CD8-positive, alpha-beta T cell (primary cell): ENCODE measurements at regions of chr13 and their contacts with region 1.

Region 1: DNA sequence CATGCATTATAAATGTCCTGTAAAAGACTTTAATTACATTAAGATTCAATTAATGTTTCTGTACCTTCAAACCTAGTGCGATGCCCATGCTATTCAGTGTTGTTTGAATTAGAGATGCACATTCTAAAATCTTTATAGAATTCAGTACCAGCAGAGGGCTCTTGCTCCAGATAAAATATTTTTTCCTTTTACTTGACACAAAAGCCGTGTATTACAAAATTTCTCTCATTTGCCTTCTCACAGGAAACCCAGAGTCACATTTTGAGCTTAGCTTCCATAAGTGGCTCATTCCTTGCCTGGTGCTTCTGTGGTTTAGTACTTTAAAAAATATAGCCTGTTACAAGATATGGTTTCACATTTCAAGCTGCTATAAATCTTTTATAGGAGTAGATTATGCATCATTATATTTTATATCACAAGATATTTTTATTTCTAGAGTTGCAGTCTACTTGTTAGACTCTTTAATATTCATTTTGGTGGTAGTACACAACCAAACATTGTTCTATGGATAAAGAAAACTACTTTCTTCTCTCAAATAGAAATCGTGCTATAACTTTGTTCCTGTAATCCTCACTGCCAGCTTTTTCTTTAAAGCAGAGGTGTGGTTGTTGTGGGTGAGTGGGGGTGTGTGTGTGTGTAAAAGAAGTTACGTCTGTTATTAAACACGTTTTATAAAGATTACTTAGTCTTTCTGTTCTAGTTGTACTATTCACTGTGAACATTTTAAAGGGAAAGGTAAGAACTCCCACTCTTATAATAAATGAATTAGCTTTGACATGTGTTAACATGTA is 101.4 kb downstream of the RNF17 start:
- DNase-seq: no peak
- ATAC-seq: no peak
- H3K4me3 ChIP-seq: no peak overlapping the region
- H3K4me3 Mint-ChIP-seq: no peak overlapping the region
- H3K27ac ChIP-seq: no peak overlapping the region
- H3K27ac Mint-ChIP-seq: no peak overlapping the region
- H3K4me1 ChIP-seq: no peaks in the 10 kb centered on the region
- H3K4me1 Mint-ChIP-seq: peaks cover 4% of the 10 kb centered on the region
- H3K27me3 ChIP-seq: no peaks in the 10 kb centered on the region
- H3K27me3 Mint-ChIP-seq: peaks cover 10% of the 10 kb centered on the region
- CTCF ChIP-seq: no peak

Region 2: GRCh38 chr13:24328145-24328544 is 537.2 kb before region 1 on chr13:
- CTCF ChIA-PET with region 1: no interaction called
- POLR2A ChIA-PET with region 1: no interaction called
- intact Hi-C with region 1: no loop called
- DNase-seq: peak in 1 of 9 experiments; percentile 14
- ATAC-seq: peak; percentile 62
- H3K4me3 ChIP-seq: no peak overlapping the region
- H3K4me3 Mint-ChIP-seq: peak overlapping the region; percentile 47
- H3K27ac ChIP-seq: no peak overlapping the region
- H3K27ac Mint-ChIP-seq: no peak overlapping the region
- H3K4me1 ChIP-seq: no peaks in the 10 kb centered on the region
- H3K4me1 Mint-ChIP-seq: no peaks in the 10 kb centered on the region
- H3K27me3 ChIP-seq: no peaks in the 10 kb centered on the region
- H3K27me3 Mint-ChIP-seq: peaks cover 35% of the 10 kb centered on the region
- CTCF ChIP-seq: no peak

Region 3: GRCh38 chr13:24887759-24888158 is 22.4 kb after region 1 on chr13:
- CTCF ChIA-PET with region 1: no interaction called
- POLR2A ChIA-PET with region 1: no interaction called
- intact Hi-C with region 1: loop called in 1 of 2 experiments (anchors 1 kb)
- DNase-seq: no peak
- ATAC-seq: no peak
- H3K4me3 ChIP-seq: no peak overlapping the region
- H3K4me3 Mint-ChIP-seq: no peak overlapping the region
- H3K27ac ChIP-seq: no peak overlapping the region
- H3K27ac Mint-ChIP-seq: no peak overlapping the region
- H3K4me1 ChIP-seq: no peaks in the 10 kb centered on the region
- H3K4me1 Mint-ChIP-seq: no peaks in the 10 kb centered on the region
- H3K27me3 ChIP-seq: no peaks in the 10 kb centered on the region
- H3K27me3 Mint-ChIP-seq: no peaks in the 10 kb centered on the region
- CTCF ChIP-seq: no peak